ENCODE measurements at regions of chr19 and their contacts with region 1.

Region 1: DNA sequence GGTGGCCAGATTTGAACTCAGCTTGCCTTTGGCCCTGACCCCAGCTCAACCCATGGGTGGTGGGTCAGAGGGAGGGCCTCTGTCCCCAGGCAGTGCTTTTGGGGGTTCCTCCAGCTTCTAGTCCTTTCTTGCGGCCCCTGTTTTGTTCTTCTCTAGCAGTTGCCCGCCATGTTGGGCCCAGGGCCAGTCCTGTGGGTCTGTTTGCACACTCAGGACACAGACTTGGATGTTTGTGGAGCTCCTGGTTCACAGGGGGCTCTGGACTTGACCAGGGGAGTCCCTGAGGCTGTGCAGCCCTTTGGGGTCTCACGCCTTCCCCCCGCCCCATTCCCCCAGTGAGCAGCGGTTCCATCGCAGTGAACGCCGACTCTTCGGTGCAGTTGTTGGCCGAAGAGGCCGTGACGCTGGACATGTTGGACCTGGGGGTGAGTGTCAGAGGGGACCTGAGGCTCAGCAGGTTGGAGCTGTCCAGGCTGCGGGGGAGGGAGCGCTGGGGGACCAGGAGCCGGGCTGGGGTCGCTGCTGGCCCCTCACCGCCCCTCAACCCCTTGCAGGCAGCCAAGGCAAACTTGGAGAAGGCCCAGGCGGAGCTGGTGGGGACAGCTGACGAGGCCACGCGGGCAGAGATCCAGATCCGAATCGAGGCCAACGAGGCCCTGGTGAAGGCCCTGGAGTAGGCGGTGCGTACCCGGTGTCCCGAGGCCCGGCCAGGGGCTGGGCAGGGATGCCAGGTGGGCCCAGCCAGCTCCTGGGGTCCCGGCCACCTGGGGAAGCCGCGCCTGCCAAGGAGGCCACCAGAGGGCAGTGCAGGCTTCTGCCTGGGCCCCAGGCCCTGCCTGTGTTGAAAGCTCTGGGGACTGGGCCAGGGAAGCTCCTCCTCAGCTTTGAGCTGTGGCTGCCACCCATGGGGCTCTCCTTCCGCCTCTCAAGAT is 2.5 kb downstream of the ATP5F1D start:
- DNase-seq: peak; percentile 91
- H3K4me3 ChIP-seq: peak overlapping the region in 1 of 4 donors; percentile 86
- H3K27ac ChIP-seq: peak overlapping the region; percentile 98 to 99 (median 98)
- H3K4me1 ChIP-seq: peaks cover 62 to 73% (median 67%) of the 10 kb centered on the region in 4 donors
- H3K27me3 ChIP-seq: no peaks in the 10 kb centered on the region
- CTCF ChIP-seq: peak; percentile 95 to 99 (median 98)
- EP300 ChIP-seq: no peak
- POLR2A ChIP-seq: no peak

Region 2: GRCh38 chr19:1266916-1267476 is 23.0 kb after region 1 on chr19:
- in situ Hi-C with region 1: no loop called
- intact Hi-C with region 1: loop called (anchors 1 kb)
- DNase-seq: peak; percentile 82
- H3K4me3 ChIP-seq: peak overlapping the region; percentile 32 to 62 (median 49)
- H3K27ac ChIP-seq: peak overlapping the region; percentile 98 to 100 (median 98)
- H3K4me1 ChIP-seq: peaks cover 59 to 80% (median 74%) of the 10 kb centered on the region in 4 donors
- H3K27me3 ChIP-seq: no peaks in the 10 kb centered on the region
- CTCF ChIP-seq: peak; percentile 91 to 99 (median 96)
- EP300 ChIP-seq: no peak
- POLR2A ChIP-seq: no peak

Region 3: DNA sequence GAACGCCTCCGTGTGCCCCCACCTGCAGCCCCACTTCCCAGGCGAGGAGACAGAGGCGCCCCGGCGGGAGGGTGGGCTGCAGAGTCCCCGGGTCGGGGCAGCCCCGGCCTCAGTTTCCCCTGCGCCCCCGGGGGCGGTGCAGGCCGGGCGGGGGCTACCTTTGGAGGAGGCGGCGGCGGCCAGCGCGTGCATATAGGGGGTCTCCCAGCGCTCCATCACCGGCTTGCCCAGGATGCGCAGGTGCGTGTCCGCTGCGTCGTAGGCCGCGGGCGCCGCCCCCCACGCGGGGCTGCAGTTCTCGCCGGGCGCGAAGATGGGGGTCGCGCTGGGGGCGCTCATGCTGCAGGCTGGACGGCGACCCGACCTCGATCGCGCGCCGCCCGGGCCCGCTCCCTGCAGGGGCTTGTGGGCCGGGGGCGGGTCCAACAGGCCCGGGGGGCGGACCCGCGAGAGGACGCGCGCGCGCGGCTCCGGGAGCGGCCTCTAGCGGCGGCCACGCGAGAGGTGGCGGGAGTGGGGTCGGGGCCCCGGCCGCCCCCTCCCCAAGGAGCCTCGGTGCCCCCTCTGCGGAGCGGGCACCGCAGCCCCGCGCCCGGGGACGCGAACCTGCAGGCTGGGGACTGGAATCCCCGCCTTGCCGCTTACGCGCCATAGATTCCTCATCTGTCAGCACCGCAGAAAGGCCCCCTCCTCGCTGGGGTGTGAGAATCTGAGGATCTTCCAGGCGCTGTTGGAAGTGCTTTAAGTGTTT is 157.3 kb after region 1 on chr19 and contains the start of gene GAMT:
- in situ Hi-C with region 1: no loop called
- intact Hi-C with region 1: no loop called
- DNase-seq: peak; percentile 52
- H3K4me3 ChIP-seq: peak within 1 kb of the TSS; percentile 30 to 59 (median 44)
- H3K27ac ChIP-seq: peak within 1 kb of the TSS in 1 of 4 donors; percentile 25
- H3K4me1 ChIP-seq: peaks cover 14 to 32% (median 23%) of the 10 kb centered on the region in 4 donors
- H3K27me3 ChIP-seq: peaks cover 49% of the 10 kb centered on the region
- CTCF ChIP-seq: peak in 4 of 5 experiments; percentile 12 to 46 (median 30)
- EP300 ChIP-seq: no peak
- POLR2A ChIP-seq: no peak
- total RNA-seq, gene GAMT: 1.4 to 4.4 (median 2.9) TPM

Region 4: GRCh38 chr19:1624458-1624857 is 380.4 kb after region 1 on chr19:
- in situ Hi-C with region 1: no loop called
- intact Hi-C with region 1: no loop called
- DNase-seq: peak; percentile 48
- H3K4me3 ChIP-seq: no peak overlapping the region
- H3K27ac ChIP-seq: no peak overlapping the region
- H3K4me1 ChIP-seq: no peaks in the 10 kb centered on the region
- H3K27me3 ChIP-seq: no peaks in the 10 kb centered on the region
- CTCF ChIP-seq: peak; percentile 53 to 63 (median 61)
- EP300 ChIP-seq: no peak
- POLR2A ChIP-seq: no peak

Measured in transverse colon (tissue), 4 donors.